GM12878 (cell line): ENCODE measurements at regions of chr14 and their contacts with region 1.

Region 1: DNA sequence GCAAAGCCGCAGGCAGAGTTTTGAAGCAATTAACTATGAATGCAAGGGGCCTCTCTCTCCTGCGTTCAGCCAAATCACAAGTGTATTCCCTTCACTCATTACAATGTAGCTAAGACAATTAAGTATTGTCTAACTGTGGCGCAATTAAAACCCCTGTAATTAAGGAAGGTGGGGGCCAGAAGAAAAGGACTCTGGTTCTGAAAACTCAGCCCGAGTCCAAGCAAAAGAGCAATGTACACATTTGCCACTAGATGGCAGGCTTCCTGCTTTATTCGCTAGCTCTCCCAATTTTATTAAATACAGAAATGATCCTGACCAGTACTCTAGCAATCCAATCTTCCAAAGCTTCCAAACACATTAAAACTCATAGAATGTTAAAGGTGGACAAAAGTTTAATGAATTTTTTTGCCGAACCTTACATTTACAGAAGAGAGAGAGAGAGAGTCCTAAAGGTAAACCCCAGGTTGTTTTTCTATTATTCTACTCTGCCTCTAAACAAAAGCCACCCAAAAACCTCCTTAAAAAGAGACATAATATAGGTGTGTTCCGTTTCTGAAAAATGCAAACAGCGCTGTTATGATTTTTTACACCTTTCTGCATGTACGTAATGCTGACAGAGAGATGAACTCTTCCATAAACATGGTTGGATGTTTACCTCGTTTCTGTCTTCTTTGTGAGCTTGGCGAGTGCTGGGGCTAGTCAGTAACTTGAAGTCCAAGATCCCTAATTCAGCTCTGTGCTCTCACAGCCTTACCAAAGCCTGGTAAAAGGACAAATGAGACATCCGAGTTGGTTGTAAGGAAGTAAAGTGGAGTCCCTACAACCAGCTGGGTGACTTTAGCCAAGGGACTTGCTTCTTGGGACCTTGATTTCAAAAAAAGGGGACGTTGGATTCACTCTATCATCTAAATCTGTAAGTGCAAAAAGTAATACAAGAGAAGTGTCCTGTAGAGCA is 50.9 kb upstream of the VASH1 start:
- DNase-seq: no peak
- ATAC-seq: peak; percentile 64
- H3K4me3 ChIP-seq: no peak overlapping the region
- H3K27ac ChIP-seq: no peak overlapping the region
- H3K4me1 ChIP-seq: no peaks in the 10 kb centered on the region
- H3K27me3 ChIP-seq: no peaks in the 10 kb centered on the region; a peak in 2 of 4 replicates
- CTCF ChIP-seq: peak; percentile 65 to 73 (median 69)
- EP300 ChIP-seq: no peak
- POLR2A ChIP-seq: no peak
- RAD21 ChIP-seq: peak; percentile 74

Region 2: DNA sequence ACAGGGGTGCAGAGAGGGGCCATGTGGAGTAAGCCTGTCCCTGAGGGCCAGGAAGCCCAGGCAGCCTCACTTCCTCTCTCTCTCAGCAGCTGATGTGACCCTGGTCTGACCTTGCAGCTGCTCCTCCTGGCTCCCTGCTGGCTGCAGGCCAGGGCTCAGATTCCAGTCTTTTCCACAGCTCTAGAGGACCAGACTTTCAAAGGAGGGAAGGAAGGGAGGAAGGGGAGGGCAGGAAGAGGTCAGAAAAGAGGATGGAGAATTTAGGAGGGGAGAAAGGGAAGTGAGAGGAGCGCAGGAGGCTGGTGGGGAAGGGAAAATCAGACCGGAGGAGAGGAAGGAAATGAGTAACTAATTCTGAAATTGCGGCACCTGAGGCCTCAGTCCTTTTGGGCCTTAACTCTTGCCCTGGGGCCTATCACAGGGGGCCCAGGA is 10.1 kb after region 1 on chr14:
- CTCF ChIA-PET with region 1: interaction called, 48 read pairs
- POLR2A ChIA-PET with region 1: no interaction called
- RAD21 ChIA-PET with region 1: interaction called, 3 read pairs
- SMC1A ChIA-PET with region 1: interaction called, 4 read pairs
- in situ Hi-C with region 1: no loop called
- intact Hi-C with region 1: no loop called
- DNase-seq: peak; percentile 34
- ATAC-seq: peak; percentile 89
- H3K4me3 ChIP-seq: no peak overlapping the region
- H3K27ac ChIP-seq: peak overlapping the region; percentile 61
- H3K4me1 ChIP-seq: peaks cover 14% of the 10 kb centered on the region
- H3K27me3 ChIP-seq: no peaks in the 10 kb centered on the region
- CTCF ChIP-seq: no peak
- EP300 ChIP-seq: no peak
- POLR2A ChIP-seq: no peak
- RAD21 ChIP-seq: no peak

Region 3: DNA sequence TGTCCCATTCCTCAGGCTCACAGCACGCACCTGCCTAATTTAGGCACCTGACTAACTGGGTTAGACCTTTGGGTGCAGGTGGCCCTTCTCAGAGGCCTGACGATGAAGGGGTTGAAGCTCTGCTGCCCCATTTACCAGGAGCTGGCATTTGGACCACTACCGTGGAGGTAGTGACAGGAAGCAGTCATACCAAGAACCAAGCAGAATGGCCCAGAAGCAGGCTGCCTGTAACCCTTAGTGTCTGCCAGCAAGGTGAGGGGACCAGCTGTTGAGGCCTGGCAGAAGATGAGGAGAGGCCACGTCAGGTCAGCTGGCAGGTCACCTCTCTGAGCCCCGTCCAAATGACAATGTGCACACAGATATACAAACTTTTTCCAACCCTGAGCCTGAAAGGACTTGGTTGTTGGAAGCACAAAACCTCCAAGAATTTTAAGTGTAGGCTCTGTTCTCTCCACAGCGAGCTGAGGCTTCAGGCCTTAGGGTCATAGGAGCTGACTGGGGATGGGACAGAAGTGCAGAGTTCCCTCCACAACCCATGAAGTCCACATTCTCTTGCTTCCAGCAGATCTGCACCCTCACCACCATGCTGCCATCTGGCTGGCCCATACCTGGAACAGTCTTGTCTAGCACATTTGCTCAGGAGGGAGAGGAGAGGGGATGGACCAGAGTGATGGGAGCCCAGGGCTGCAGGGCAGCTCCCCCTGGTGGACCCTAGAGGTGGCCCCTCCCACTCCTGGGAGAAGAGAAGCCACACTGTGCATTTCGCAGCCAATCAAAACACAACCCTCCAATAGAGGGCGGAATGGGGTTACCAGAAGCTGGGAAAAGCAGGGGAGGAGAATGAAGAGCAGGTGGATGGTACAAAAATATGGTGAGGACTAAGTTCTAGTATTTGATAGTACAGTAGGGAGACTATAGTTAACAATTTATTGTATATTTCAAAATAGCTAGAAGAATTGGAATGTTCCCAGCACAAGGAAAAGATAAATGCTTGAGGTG is 74.2 kb after region 1 on chr14:
- CTCF ChIA-PET with region 1: interaction called, 136 read pairs
- POLR2A ChIA-PET with region 1: no interaction called
- RAD21 ChIA-PET with region 1: interaction called, 41 read pairs
- SMC1A ChIA-PET with region 1: interaction called, 67 read pairs
- in situ Hi-C with region 1: loop called (anchors 5 kb)
- intact Hi-C with region 1: loop called (anchors 1 kb)
- DNase-seq: no peak
- ATAC-seq: peak; percentile 99
- H3K4me3 ChIP-seq: no peak overlapping the region
- H3K27ac ChIP-seq: no peak overlapping the region
- H3K4me1 ChIP-seq: peaks cover 15% of the 10 kb centered on the region
- H3K27me3 ChIP-seq: no peaks in the 10 kb centered on the region
- CTCF ChIP-seq: peak; percentile 58 to 80 (median 75)
- EP300 ChIP-seq: no peak
- POLR2A ChIP-seq: no peak
- RAD21 ChIP-seq: peak; percentile 57

Region 4: DNA sequence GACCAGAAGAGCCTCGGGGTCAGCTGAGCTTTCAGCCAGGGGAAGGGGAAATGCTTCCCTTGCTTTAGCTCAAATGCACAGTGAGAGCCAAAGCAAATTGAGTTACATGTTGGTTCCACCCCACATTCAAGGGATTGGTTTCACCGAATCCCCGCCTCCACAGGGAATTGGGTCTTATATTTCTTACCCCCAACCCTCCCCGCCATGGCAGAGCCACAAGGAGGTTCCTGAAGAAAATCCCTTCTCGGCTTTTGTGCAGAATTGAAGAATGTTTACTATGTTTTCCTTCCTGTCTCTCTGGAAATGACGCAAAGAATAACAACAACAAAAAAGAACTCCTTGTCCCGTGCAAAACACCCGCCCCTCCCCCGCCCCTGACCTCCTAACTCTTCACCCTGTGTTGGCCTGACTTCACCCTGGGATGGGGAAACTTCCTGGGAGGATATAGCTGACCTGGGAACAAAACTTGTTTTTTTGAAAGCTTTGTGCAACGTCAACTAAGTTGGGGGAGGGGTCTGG is 365.8 kb after region 1 on chr14:
- CTCF ChIA-PET with region 1: interaction called, 40 read pairs
- POLR2A ChIA-PET with region 1: no interaction called
- RAD21 ChIA-PET with region 1: interaction called, 14 read pairs
- SMC1A ChIA-PET with region 1: interaction called, 30 read pairs
- in situ Hi-C with region 1: no loop called
- intact Hi-C with region 1: no loop called
- DNase-seq: no peak
- ATAC-seq: no peak
- H3K4me3 ChIP-seq: no peak overlapping the region
- H3K27ac ChIP-seq: no peak overlapping the region
- H3K4me1 ChIP-seq: peaks cover 6% of the 10 kb centered on the region; the same call in 1 of the 2 replicates
- H3K27me3 ChIP-seq: no peaks in the 10 kb centered on the region
- CTCF ChIP-seq: no peak
- EP300 ChIP-seq: no peak
- POLR2A ChIP-seq: no peak
- RAD21 ChIP-seq: no peak